Naive thymus-derived CD4-positive, alpha-beta T cell (primary cell): ENCODE measurements at regions of chr4 and their contacts with region 1.

Region 1: DNA sequence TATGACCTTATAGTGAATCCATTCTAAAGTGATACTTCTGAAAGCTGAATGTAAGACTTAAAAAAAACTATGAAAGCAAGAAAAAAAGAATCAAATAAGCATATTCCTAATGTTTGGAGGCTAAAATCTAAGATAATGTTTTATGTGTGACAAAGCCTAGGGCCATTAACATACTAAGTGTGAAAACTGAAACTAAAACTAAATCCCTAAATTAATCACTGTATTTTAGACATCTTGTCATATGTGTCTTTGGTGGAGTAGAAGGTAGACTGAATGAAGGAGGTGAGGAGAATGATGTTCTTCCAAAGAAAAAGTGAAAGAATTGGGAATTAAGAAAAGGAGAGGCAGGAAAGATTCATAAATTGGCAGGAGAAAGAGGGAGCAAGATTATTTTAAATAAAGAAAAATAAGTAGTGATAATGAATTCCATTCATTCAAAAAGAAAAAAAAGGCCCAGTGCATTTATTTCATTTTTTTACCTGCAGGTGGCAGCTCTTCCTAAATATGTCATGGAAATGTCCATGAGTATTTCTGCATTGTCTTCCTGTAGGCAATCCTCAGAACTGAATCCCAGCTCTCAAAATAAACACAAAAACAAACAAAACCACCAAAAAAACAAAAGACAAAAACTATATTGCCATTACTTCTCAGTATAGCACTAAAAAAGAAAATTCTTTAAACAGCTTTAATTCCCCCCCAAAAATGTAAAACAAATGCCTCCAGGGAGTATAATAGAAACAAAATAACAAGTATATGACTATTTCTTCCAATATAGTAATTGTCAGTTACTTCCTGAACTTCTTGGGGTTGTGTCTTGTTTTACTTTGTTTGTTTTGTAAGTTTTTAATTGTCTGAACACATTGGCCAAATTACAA is 17.0 kb upstream of the AP1AR start:
- DNase-seq: peak in 3 of 9 donors; percentile 16 to 26 (median 20)
- ATAC-seq: no peak
- H3K4me3 ChIP-seq: no peak overlapping the region
- H3K4me3 Mint-ChIP-seq: no peak overlapping the region
- H3K27ac ChIP-seq: no peak overlapping the region
- H3K27ac Mint-ChIP-seq: peak overlapping the region in 2 of 9 donors; percentile 5 to 7
- H3K4me1 ChIP-seq: no peaks in the 10 kb centered on the region
- H3K4me1 Mint-ChIP-seq: peaks cover 0 to 9% (median 4%) of the 10 kb centered on the region in 7 donors
- H3K27me3 ChIP-seq: no peaks in the 10 kb centered on the region
- H3K27me3 Mint-ChIP-seq: peaks cover 0 to 6% (median 0%) of the 10 kb centered on the region in 5 donors

Region 2: DNA sequence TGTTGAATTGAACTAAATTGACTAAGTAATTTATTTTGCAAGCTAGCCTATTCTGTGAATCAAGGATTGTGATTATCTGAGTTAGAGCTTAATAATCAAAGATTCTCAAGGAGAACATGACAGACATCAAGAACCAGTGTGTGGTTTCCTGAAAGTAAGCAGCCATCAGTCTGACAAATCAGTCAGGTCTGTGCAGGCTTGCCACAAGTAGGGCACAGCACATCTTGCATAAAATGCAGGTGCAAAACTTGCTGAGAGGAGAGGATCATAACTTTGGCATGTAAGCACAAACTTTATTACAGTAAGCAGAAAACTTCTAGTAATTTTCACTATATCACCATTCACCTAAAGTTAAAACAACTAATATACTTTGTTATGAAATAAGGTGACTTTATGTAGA is 46.8 kb before region 1 on chr4:
- CTCF ChIA-PET with region 1: no interaction called
- POLR2A ChIA-PET with region 1: no interaction called
- intact Hi-C with region 1: loop called in 1 of 2 experiments (anchors 5 kb)
- DNase-seq: peak in 7 of 9 donors; percentile 18 to 51 (median 30)
- ATAC-seq: peak; percentile 89
- H3K4me3 ChIP-seq: no peak overlapping the region
- H3K4me3 Mint-ChIP-seq: peak overlapping the region in 6 of 10 donors; percentile 1 to 54 (median 16)
- H3K27ac ChIP-seq: peak overlapping the region; percentile 17
- H3K27ac Mint-ChIP-seq: peak overlapping the region in 7 of 9 donors; percentile 4 to 69 (median 42)
- H3K4me1 ChIP-seq: peaks cover 0 to 12% of the 10 kb centered on the region in 2 donors
- H3K4me1 Mint-ChIP-seq: peaks cover 7 to 58% (median 32%) of the 10 kb centered on the region in 7 donors
- H3K27me3 ChIP-seq: no peaks in the 10 kb centered on the region
- H3K27me3 Mint-ChIP-seq: no peaks in the 10 kb centered on the region

Region 3: GRCh38 chr4:112266821-112267220 is 52.2 kb after region 1 on chr4:
- CTCF ChIA-PET with region 1: interaction called, 3 read pairs
- POLR2A ChIA-PET with region 1: no interaction called
- intact Hi-C with region 1: loop called in 1 of 2 experiments (anchors 1 kb)
- DNase-seq: peak in 2 of 9 donors; percentile 11 to 24
- ATAC-seq: peak; percentile 45
- H3K4me3 ChIP-seq: no peak overlapping the region
- H3K4me3 Mint-ChIP-seq: no peak overlapping the region
- H3K27ac ChIP-seq: no peak overlapping the region
- H3K27ac Mint-ChIP-seq: peak overlapping the region in 1 of 9 donors; percentile 22
- H3K4me1 ChIP-seq: no peaks in the 10 kb centered on the region
- H3K4me1 Mint-ChIP-seq: peaks cover 0 to 17% (median 0%) of the 10 kb centered on the region in 7 donors
- H3K27me3 ChIP-seq: no peaks in the 10 kb centered on the region
- H3K27me3 Mint-ChIP-seq: no peaks in the 10 kb centered on the region

Region 4: DNA sequence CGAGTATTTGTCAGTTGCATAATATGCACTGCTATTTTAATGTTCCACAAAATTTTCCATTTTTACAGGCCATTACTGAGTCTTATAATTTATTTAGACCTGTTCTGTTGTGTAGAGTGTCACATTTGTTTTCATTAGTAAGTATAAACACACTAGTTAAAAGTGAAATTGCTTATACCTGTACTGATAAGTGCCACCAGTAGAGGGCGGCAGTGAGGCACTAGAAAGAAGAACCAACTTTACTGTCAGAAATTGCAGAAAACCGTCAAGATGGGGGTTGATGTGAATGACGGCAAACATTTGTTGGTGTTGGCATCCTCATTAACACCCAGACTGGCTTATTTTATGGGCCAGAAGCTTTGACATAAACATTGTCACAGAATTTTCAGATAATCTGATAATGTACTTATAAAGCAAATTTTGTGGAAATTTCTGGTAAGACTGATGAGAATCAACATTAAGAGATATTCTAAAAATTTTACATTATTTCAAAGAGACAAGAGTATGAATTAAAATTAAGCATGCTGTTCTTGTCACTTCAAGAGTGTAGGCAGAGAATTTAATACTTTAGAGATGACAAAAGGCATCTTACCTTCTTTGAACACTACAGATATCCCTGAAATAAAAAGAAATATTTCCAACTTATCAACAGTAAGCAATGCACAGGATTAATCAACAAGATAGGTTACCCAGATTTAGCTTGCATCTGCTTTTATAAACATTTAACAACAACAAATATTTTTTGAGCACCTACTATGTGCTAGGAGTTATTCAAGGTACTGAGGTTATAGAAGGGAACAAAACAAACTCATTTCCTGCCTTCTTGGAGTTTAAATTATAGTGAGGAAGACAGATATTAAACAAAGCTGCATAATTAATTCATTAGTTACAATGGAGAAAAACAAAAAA is 107.4 kb after region 1 on chr4:
- CTCF ChIA-PET with region 1: no interaction called
- POLR2A ChIA-PET with region 1: no interaction called
- intact Hi-C with region 1: loop called in 1 of 2 experiments (anchors 2 kb)
- DNase-seq: peak; percentile 44 to 74 (median 71)
- ATAC-seq: peak; percentile 96
- H3K4me3 ChIP-seq: no peak overlapping the region
- H3K4me3 Mint-ChIP-seq: peak overlapping the region in 7 of 10 donors; percentile 27 to 75 (median 62)
- H3K27ac ChIP-seq: no peak overlapping the region
- H3K27ac Mint-ChIP-seq: peak overlapping the region in 3 of 9 donors; percentile 15 to 59 (median 38)
- H3K4me1 ChIP-seq: no peaks in the 10 kb centered on the region
- H3K4me1 Mint-ChIP-seq: peaks cover 10 to 34% (median 14%) of the 10 kb centered on the region in 7 donors
- H3K27me3 ChIP-seq: no peaks in the 10 kb centered on the region
- H3K27me3 Mint-ChIP-seq: no peaks in the 10 kb centered on the region